Activated CD4-positive, alpha-beta T cell treated with anti-CD3 and anti-CD28 coated beads, Interleukin-2, amount 10 ng/mL, durations not matched to agents 7 days and 5 days (primary cell): ENCODE measurements at regions of chr1 and their contacts with region 1.

Region 1: GRCh38 chr1:156728597-156729462 is at the start of gene ISG20L2:
- DNase-seq: peak; percentile 98
- H3K4me3 Mint-ChIP-seq: no peak within 1 kb of the TSS
- H3K27ac Mint-ChIP-seq: no peak within 1 kb of the TSS
- H3K4me1 Mint-ChIP-seq: peaks cover 27% of the 10 kb centered on the region
- H3K27me3 Mint-ChIP-seq: no peaks in the 10 kb centered on the region
- total RNA-seq, gene ISG20L2: 47.0 to 58.0 TPM

Region 2: GRCh38 chr1:156517746-156518145 is 211.1 kb before region 1 on chr1:
- CTCF ChIA-PET with region 1: no interaction called
- POLR2A ChIA-PET with region 1: no interaction called
- DNase-seq: no peak
- H3K4me3 Mint-ChIP-seq: no peak overlapping the region
- H3K27ac Mint-ChIP-seq: no peak overlapping the region
- H3K4me1 Mint-ChIP-seq: no peaks in the 10 kb centered on the region
- H3K27me3 Mint-ChIP-seq: peaks cover 2% of the 10 kb centered on the region

Region 3: DNA sequence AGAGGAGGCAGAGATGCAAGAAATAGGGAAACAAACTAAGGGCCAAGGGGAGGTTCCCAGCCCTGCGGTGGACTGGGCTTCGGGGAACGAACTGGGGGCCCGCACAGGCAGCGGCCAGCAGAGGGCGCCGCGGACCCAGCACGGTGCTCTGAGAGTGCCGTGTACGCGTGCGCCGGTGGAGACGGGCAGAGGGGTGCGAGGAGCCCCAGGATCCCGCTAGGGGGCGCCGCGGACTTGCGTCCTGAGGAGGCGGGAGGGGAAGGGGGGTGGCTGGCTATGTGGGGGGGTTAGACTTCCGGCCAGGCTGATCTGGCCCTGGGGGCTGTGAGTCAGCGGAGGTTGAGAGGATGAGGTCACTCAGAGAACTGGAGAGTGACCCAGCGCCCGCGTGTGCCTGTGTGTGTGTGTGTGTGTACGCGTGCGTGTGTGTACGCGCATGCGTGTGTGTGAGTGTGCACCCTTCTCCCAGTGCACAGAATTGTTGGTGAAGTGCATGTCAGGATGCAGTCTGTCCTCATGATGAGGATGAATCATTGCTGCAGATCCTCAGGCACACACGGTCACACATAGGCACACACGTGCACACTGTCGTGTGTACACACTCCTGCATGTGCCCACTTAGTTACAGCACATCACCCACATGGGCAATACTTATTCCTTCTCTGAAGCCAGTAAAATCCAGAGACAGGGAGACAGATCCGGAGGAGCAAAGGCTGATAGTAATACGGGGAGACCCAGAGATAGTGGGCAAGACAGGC is 68.7 kb before region 1 on chr1:
- CTCF ChIA-PET with region 1: interaction called, 54 read pairs
- POLR2A ChIA-PET with region 1: no interaction called
- DNase-seq: peak; percentile 92
- H3K4me3 Mint-ChIP-seq: peak overlapping the region; percentile 73
- H3K27ac Mint-ChIP-seq: peak overlapping the region; percentile 82
- H3K4me1 Mint-ChIP-seq: peaks cover 61% of the 10 kb centered on the region
- H3K27me3 Mint-ChIP-seq: peaks cover 35% of the 10 kb centered on the region

Region 4: GRCh38 chr1:156705918-156706656 is 22.7 kb before region 1 on chr1:
- CTCF ChIA-PET with region 1: interaction called, 92 read pairs
- POLR2A ChIA-PET with region 1: no interaction called
- DNase-seq: peak; percentile 65
- H3K4me3 Mint-ChIP-seq: peak overlapping the region; percentile 71
- H3K27ac Mint-ChIP-seq: no peak overlapping the region
- H3K4me1 Mint-ChIP-seq: peaks cover 25% of the 10 kb centered on the region
- H3K27me3 Mint-ChIP-seq: peaks cover 38% of the 10 kb centered on the region

Region 5: DNA sequence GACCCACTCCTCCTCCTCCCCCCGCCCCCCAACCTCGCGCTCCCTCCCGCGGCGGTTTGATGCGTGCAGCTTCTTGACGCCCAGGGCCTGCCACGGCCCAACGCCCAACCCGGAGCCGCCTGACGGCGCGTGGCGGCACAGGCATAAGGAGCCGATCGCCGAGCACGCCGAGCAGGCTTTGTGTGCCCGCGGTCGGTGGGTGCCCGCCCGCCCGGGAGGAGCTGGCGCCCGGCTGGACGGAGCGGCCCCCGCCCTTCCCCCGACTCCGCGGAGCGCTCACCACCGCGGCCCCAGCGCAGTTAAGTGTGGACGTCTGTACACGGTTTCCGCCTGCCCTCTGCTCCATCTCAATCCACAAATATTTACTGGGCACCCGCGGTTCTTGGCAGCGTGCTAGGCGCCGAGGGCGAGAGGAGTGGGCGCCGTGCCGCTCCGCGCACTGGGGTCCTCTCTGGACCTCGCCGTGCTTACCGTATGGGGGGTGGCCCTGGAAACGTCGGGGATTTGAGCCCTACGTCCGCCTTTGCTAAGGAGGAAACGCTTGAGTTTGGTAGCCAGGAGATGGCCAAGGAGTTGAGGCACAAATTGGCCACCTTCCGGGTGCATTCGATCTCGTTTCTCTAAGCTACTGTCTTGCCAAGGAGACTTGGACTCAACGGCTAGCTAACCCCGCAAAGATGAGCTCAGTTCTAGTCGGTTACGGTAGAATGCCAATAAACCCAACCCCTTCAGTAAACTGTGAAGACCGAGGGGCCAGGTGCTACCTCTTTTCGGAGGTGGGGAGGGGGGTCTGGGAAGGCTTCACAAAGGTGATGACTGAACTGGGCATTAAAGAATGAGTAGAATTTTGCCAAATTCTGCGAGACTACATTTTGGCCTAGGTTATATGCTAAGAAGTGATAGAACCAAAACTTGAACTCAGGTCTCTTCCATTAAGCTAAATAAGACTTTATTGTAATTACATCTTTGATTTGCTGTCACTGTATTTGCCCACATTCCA is 23.2 kb after region 1 on chr1:
- CTCF ChIA-PET with region 1: interaction called, 15 read pairs
- POLR2A ChIA-PET with region 1: interaction called, 8 read pairs
- DNase-seq: peak; percentile 98
- H3K4me3 Mint-ChIP-seq: peak overlapping the region; percentile 90
- H3K27ac Mint-ChIP-seq: peak overlapping the region; percentile 95
- H3K4me1 Mint-ChIP-seq: peaks cover 48% of the 10 kb centered on the region
- H3K27me3 Mint-ChIP-seq: no peaks in the 10 kb centered on the region

Region 6: DNA sequence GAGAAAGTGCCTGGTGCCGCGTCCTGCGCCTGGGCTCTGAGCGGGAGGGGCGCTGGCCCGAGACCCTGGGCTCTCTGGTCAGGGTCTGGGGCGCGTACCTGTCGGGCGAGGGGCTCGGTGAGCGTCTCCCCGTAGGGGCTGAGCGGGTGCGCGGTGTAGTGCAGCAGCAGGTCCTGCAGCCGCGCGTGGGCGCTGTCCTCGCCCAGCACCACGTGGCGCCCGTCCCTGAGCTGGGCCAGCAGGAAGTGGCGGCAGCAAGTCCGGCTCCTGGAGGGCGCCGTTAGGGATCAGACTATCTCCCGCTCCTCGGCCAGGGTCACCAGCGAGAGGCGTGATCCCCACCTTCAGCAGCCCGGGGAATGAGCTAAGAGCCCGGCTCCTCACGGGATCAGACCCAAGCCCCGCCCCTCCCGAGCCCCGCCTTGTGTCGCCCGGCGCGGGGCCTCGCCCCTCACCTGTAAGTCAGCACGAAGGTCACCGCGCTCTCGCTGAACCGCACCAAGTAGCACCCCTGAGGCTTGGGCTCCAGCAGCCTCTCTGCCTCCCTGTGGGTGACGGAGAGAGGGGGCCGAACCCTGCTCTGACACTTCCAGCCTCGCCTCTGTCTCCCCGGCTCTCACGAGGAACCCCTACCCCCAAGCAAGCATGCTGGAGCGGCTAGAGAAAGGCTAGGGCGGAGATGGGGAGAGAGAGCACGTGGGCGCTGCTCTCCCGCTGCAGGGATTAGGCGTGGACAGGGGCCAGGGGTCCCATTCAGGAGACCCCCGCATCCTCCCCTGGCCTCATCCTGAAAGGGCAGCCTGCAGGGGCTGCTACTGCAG is 85.1 kb after region 1 on chr1:
- CTCF ChIA-PET with region 1: interaction called, 16 read pairs
- POLR2A ChIA-PET with region 1: no interaction called
- DNase-seq: peak; percentile 74
- H3K4me3 Mint-ChIP-seq: peak overlapping the region; percentile 80
- H3K27ac Mint-ChIP-seq: peak overlapping the region; percentile 99
- H3K4me1 Mint-ChIP-seq: peaks cover 81% of the 10 kb centered on the region
- H3K27me3 Mint-ChIP-seq: no peaks in the 10 kb centered on the region

Region 7: GRCh38 chr1:156927215-156928042 is 198.6 kb after region 1 on chr1:
- CTCF ChIA-PET with region 1: interaction called, 13 read pairs
- POLR2A ChIA-PET with region 1: no interaction called
- DNase-seq: peak; percentile 78
- H3K4me3 Mint-ChIP-seq: peak overlapping the region; percentile 12
- H3K27ac Mint-ChIP-seq: no peak overlapping the region
- H3K4me1 Mint-ChIP-seq: peaks cover 32% of the 10 kb centered on the region
- H3K27me3 Mint-ChIP-seq: peaks cover 74% of the 10 kb centered on the region